H1 (cell line): ENCODE measurements at regions of chr12 and their contacts with region 1.

Region 1: GRCh38 chr12:31506515-31507306 is 84.2 kb downstream of the DENND5B start:
- DNase-seq: peak in 1 of 2 experiments; percentile 41
- H3K4me3 ChIP-seq: peak overlapping the region in 1 of 4 experiments; percentile 0; a peak in 1 of 8 replicates
- H3K27ac ChIP-seq: peak overlapping the region; percentile 5; the same call in 1 of the 2 replicates
- H3K4me1 ChIP-seq: peaks cover 7 to 18% (median 16%) of the 10 kb centered on the region in 4 experiments; a peak in 6 of 7 replicates
- H3K27me3 ChIP-seq: no peaks in the 10 kb centered on the region
- CTCF ChIP-seq: no peak
- EP300 ChIP-seq: no peak
- POLR2A ChIP-seq: no peak
- RAD21 ChIP-seq: no peak

Region 2: DNA sequence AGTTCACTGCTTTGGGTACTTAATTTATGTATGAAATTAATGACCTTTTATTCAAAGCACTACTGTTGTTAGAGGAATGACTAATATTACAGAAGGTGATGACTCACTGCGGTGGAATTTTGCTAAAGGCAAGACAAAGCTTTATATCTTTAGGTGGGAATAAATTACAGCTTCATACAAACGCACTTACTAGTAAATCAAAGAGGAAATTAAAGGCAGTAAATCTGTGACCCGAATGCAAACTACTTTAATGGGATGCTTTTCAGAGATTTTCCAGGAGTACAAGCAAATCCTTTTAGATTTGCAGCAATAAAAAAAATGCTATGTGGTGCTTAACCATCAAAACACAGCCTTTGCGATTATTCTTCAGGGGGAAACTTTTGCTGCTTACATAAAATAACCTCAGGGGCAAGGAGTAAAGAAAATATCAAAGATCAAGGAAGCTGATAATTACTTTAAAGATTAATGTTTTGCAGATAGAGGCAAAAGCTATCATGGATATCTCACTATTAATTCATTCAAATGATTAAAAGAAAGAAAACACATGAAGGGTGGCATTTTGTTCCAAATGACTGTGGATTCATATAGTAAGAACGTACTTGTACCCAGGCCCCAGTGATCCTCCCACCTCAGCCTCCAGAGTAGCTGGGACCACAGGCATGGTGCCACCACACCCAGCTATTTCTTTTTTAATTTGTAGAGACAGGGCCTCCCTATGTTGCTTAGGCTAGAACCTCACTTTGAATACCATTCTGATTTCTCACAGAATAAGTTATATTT is 14.7 kb before region 1 on chr12:
- CTCF ChIA-PET with region 1: no interaction called
- POLR2A ChIA-PET with region 1: no interaction called
- DNase-seq: no peak
- H3K4me3 ChIP-seq: no peak overlapping the region
- H3K27ac ChIP-seq: no peak overlapping the region
- H3K4me1 ChIP-seq: peaks cover 0 to 5% (median 0%) of the 10 kb centered on the region in 4 experiments; a peak in 2 of 7 replicates
- H3K27me3 ChIP-seq: no peaks in the 10 kb centered on the region
- CTCF ChIP-seq: no peak
- EP300 ChIP-seq: no peak
- POLR2A ChIP-seq: no peak
- RAD21 ChIP-seq: no peak

Region 3: GRCh38 chr12:31518680-31519227 is 12.0 kb after region 1 on chr12:
- CTCF ChIA-PET with region 1: interaction called, 10 read pairs
- POLR2A ChIA-PET with region 1: interaction called, 18 read pairs
- DNase-seq: peak in 1 of 2 experiments; percentile 64
- H3K4me3 ChIP-seq: peak overlapping the region in 1 of 4 experiments; percentile 25; a peak in 3 of 8 replicates
- H3K27ac ChIP-seq: peak overlapping the region; percentile 48; the same call in 1 of the 2 replicates
- H3K4me1 ChIP-seq: peaks cover 11 to 38% (median 22%) of the 10 kb centered on the region in 4 experiments
- H3K27me3 ChIP-seq: no peaks in the 10 kb centered on the region
- CTCF ChIP-seq: no peak
- EP300 ChIP-seq: peak in 1 of 2 experiments; percentile 43; a peak in 1 of 3 replicates
- POLR2A ChIP-seq: no peak
- RAD21 ChIP-seq: no peak